Activated naive CD4-positive, alpha-beta T cell treated with anti-CD3 and anti-CD28 coated beads for 36 hours (primary cell): ENCODE measurements at regions of chr9 and their contacts with region 1.

Region 1: DNA sequence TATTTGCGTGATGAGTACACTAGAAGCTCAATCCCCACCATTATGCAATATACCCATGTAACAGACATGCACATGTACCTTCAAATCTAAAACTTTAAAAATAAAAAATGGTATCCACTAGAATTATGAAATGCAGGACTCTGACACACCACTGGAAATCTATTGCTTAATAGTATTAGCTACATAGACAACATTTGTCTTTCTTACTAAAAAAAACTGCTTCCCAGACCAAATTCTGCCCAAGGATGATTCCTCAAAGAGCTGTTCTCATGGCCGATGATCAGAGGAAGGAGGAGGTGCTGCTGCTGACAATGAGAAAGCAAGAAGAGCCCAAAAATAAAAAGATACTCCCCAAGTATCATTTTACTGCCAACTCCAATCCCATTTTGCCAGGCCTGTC is 67.2 kb downstream of the TTC39B start:
- DNase-seq: no peak
- H3K4me3 Mint-ChIP-seq: no peak overlapping the region
- H3K27ac Mint-ChIP-seq: no peak overlapping the region
- H3K4me1 Mint-ChIP-seq: peaks cover 39% of the 10 kb centered on the region
- H3K27me3 Mint-ChIP-seq: no peaks in the 10 kb centered on the region

Region 2: GRCh38 chr9:14670718-14671117 is 569.1 kb before region 1 on chr9:
- CTCF ChIA-PET with region 1: no interaction called
- intact Hi-C with region 1: no loop called
- DNase-seq: no peak
- H3K4me3 Mint-ChIP-seq: no peak overlapping the region
- H3K27ac Mint-ChIP-seq: no peak overlapping the region
- H3K4me1 Mint-ChIP-seq: peaks cover 9% of the 10 kb centered on the region
- H3K27me3 Mint-ChIP-seq: no peaks in the 10 kb centered on the region

Region 3: DNA sequence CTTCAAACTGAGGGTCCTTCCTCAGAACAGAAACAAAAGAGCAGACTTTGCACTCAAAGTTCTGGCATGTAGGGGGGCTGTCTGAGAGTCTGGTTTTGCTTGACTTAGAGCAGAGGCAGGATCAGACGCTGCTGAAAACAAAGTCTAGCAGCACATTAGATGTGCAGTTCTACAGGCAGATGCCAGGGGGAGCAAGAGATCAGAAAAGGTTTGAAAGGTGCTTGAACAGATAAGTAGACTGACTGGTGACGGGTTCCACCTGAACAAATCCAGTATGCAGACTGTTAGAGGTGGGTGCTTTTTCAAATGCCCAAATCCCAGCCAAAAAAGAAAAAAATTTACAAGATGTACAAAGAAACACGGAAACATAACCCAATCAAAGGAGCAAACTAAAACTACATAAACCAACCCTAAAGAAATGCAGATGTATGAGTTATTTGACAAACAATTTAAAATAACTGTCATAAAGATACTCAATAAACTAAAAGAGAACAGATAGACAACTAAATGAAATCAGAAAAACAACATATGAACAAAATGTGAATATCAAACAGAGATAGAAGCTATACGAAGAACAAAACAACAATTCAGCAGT is 134.9 kb before region 1 on chr9:
- CTCF ChIA-PET with region 1: no interaction called
- intact Hi-C with region 1: no loop called
- DNase-seq: peak; percentile 60
- H3K4me3 Mint-ChIP-seq: no peak overlapping the region
- H3K27ac Mint-ChIP-seq: no peak overlapping the region
- H3K4me1 Mint-ChIP-seq: no peaks in the 10 kb centered on the region
- H3K27me3 Mint-ChIP-seq: peaks cover 2% of the 10 kb centered on the region

Region 4: DNA sequence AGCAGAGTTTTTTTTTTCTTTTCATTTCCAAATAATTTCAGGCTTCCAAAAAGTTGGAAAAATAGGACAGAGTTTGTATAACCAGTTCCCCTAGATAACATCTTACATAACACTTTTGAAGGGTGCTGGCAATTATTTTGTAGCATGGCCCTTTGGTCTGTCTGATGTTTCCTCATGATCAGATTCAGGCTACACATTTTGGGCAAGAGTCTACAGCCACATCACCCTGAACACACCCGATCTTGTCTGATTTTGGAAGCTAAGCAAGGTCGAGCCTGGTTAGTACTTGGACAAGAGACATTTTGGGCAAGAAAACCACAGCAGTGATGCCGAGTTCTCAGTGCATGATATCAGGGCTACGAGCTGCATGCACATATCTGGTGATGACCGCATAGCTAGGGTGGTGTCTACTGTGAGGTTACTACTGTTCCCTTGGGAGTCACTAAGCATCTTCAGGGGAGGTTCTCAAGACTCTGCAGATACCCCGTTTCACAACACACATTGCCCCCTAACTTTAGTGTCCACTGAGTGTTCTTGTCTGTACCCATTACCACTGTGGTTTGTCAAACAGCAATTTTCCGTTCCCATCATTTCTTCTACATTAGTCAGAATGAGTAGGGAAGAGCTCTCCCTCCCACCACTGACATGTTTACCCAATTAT is 19.0 kb before region 1 on chr9:
- CTCF ChIA-PET with region 1: interaction called, 6 read pairs
- intact Hi-C with region 1: loop called (anchors 2 kb)
- DNase-seq: no peak
- H3K4me3 Mint-ChIP-seq: no peak overlapping the region
- H3K27ac Mint-ChIP-seq: peak overlapping the region; percentile 6
- H3K4me1 Mint-ChIP-seq: peaks cover 27% of the 10 kb centered on the region
- H3K27me3 Mint-ChIP-seq: no peaks in the 10 kb centered on the region

Region 5: GRCh38 chr9:15389173-15389572 is 149.4 kb after region 1 on chr9:
- CTCF ChIA-PET with region 1: no interaction called
- intact Hi-C with region 1: no loop called
- DNase-seq: no peak
- H3K4me3 Mint-ChIP-seq: no peak overlapping the region
- H3K27ac Mint-ChIP-seq: no peak overlapping the region
- H3K4me1 Mint-ChIP-seq: no peaks in the 10 kb centered on the region
- H3K27me3 Mint-ChIP-seq: no peaks in the 10 kb centered on the region